ENCODE measurements at regions of chr7 and their contacts with region 1.

Region 1: GRCh38 chr7:95527033-95527775 is 41.5 kb downstream of the ASB4 start:
- DNase-seq: peak in 1 of 2 donors; percentile 13
- ATAC-seq: peak; percentile 44 to 82 (median 62)
- H3K4me3 ChIP-seq: no peak overlapping the region
- H3K4me3 Mint-ChIP-seq: no peak overlapping the region
- H3K27ac ChIP-seq: no peak overlapping the region
- H3K27ac Mint-ChIP-seq: no peak overlapping the region
- H3K4me1 ChIP-seq: no peaks in the 10 kb centered on the region
- H3K4me1 Mint-ChIP-seq: no peaks in the 10 kb centered on the region
- H3K27me3 ChIP-seq: peaks cover 3% of the 10 kb centered on the region
- H3K27me3 Mint-ChIP-seq: peaks cover 7 to 18% of the 10 kb centered on the region in 2 donors
- CTCF ChIP-seq: peak; percentile 77

Region 2: DNA sequence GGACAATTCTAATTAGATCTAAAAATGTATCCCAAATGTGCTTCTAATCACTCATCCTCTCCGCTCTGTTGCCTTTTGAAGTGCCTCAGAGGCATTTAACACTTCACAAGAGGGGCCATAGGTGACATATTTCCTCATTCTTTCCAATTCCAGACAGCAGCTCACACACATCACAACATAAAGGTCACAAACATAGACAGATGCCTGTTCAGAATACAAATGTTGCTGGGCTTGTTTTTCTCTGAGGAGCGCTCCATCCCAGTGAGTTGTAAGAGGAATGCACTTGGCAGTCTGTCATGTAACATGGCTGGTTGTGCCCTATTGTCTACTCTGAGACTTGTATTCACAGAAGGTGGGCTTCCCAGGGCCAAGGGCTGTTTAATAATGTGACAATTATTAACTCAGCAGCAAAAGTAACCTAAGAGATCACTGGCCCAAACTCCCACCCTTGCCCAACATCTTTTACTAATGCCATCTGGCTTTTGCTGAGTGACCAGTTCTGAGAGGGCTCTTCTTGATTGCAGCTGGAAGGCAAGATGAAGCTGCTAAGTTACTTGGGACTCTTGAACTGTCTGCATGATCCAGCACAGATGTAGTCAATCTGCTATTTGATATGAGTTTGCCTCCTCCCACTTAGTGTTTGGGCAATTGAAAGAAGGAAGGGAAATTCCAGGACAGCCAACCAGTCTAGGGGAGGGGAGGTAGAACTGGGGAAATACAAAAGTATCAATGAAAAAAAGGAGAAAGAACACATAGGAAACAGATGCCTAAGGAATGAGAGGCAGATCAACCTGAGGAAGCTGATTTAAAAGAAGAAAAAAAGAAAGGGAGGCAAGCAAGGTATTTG is 106.0 kb before region 1 on chr7:
- intact Hi-C with region 1: no loop called
- DNase-seq: no peak
- ATAC-seq: no peak
- H3K4me3 ChIP-seq: no peak overlapping the region
- H3K4me3 Mint-ChIP-seq: no peak overlapping the region
- H3K27ac ChIP-seq: no peak overlapping the region
- H3K27ac Mint-ChIP-seq: no peak overlapping the region
- H3K4me1 ChIP-seq: no peaks in the 10 kb centered on the region
- H3K4me1 Mint-ChIP-seq: peaks cover 11 to 22% of the 10 kb centered on the region in 2 donors
- H3K27me3 ChIP-seq: no peaks in the 10 kb centered on the region
- H3K27me3 Mint-ChIP-seq: no peaks in the 10 kb centered on the region
- CTCF ChIP-seq: no peak

Region 3: DNA sequence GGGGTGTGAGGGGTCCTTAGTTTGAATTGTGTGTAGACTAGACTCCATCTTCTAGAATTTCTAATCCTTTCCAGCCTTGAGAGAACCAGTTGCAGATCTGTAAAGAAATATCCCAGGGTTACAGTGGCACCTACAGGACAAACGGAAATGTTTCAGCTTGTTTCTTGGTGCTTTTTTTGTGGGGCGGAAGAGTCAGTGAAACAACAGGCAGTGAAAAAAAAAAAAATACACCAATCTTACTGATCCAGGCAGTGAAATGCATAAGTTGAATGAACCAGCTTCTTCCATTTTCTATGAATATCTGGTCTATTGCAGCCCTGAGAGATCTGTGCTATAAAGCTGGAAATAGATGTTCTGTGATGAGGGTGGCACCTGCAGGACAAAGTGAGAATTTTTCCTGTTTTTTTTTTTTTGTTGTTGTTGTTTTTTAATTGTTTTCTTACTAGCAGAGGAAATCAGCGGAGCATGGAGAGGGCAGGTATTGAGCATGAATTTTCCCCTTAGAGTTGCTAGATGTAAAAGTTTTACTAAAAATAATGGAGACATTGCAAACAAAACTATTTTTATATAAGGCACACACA is 163.3 kb after region 1 on chr7:
- intact Hi-C with region 1: loop called (anchors 1 kb)
- DNase-seq: peak in 1 of 2 donors; percentile 13
- ATAC-seq: peak; percentile 68 to 78 (median 77)
- H3K4me3 ChIP-seq: no peak overlapping the region
- H3K4me3 Mint-ChIP-seq: no peak overlapping the region
- H3K27ac ChIP-seq: no peak overlapping the region
- H3K27ac Mint-ChIP-seq: no peak overlapping the region
- H3K4me1 ChIP-seq: no peaks in the 10 kb centered on the region
- H3K4me1 Mint-ChIP-seq: peaks cover 5 to 7% of the 10 kb centered on the region in 2 donors
- H3K27me3 ChIP-seq: no peaks in the 10 kb centered on the region
- H3K27me3 Mint-ChIP-seq: peaks cover 7 to 12% of the 10 kb centered on the region in 2 donors
- CTCF ChIP-seq: peak; percentile 82

Region 4: DNA sequence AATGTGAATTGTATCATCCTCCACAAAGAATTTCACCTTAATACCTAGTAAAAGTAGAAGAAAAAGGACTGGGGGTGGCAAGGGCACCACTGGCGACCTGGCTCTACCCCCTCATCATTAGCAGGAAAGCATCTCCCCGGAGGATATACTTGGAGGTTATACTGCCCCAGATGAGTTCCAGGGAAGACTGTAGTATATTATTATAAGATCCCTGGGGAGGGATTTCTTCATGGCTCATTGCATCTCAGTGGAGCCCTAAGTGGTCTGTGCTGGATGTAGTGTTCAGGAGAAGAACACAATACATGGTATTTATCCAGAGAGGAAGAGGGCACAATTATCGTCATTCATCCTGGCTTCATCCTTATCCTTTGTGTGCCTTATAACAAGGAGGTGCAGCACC is 231.0 kb after region 1 on chr7:
- intact Hi-C with region 1: no loop called
- DNase-seq: no peak
- ATAC-seq: no peak
- H3K4me3 ChIP-seq: no peak overlapping the region
- H3K4me3 Mint-ChIP-seq: no peak overlapping the region
- H3K27ac ChIP-seq: no peak overlapping the region
- H3K27ac Mint-ChIP-seq: no peak overlapping the region
- H3K4me1 ChIP-seq: no peaks in the 10 kb centered on the region
- H3K4me1 Mint-ChIP-seq: no peaks in the 10 kb centered on the region
- H3K27me3 ChIP-seq: no peaks in the 10 kb centered on the region
- H3K27me3 Mint-ChIP-seq: peaks cover 4 to 16% of the 10 kb centered on the region in 2 donors
- CTCF ChIP-seq: no peak

Region 5: DNA sequence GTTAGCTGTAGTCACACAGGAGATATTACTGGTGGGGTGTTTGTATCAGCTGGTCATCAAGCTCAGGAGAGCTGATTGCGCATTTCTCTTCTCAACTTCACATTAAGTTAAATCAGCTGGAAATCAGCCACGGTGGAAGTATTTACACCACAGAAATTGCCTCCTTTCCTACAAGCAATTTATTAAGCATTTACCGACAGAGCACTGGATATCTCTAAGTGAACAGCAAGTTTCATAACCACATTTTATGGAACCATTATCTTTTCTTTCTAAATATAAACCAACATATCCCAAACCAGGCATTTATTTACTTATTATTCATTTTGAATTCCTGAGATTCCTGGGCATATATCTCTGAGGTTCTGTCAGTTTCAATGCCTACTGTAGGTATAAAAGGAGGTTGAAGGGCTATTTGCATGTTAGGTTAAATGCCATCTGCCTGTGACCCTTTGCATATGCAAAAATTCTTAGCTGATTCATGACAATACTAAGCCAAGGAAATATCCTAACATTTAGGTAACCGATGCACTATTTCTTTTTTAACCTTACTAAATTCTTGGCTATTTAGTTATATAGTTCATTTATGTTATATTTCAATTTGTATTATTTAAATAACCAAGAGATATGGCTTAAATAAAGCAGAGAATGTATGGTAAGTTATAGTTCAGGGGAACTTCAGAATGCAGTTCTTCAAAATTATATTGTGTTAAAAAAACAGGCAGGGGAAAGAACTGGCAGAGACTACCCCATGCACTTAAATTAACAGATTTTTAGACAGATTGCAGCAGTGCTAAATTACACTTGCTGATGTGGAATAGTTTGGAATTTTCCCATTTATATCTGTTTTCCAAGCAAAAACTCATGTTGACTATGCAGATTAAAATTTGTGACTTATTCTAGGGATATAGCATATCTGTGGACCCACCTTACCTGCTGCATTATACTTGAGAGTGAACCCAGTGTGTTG is 301.9 kb after region 1 on chr7:
- intact Hi-C with region 1: no loop called
- DNase-seq: no peak
- ATAC-seq: no peak
- H3K4me3 ChIP-seq: no peak overlapping the region
- H3K4me3 Mint-ChIP-seq: no peak overlapping the region
- H3K27ac ChIP-seq: no peak overlapping the region
- H3K27ac Mint-ChIP-seq: no peak overlapping the region
- H3K4me1 ChIP-seq: no peaks in the 10 kb centered on the region
- H3K4me1 Mint-ChIP-seq: no peaks in the 10 kb centered on the region
- H3K27me3 ChIP-seq: no peaks in the 10 kb centered on the region
- H3K27me3 Mint-ChIP-seq: no peaks in the 10 kb centered on the region
- CTCF ChIP-seq: no peak

Region 6: GRCh38 chr7:95952851-95953250 is 425.6 kb after region 1 on chr7:
- intact Hi-C with region 1: no loop called
- DNase-seq: no peak
- ATAC-seq: no peak
- H3K4me3 ChIP-seq: no peak overlapping the region
- H3K4me3 Mint-ChIP-seq: no peak overlapping the region
- H3K27ac ChIP-seq: no peak overlapping the region
- H3K27ac Mint-ChIP-seq: no peak overlapping the region
- H3K4me1 ChIP-seq: no peaks in the 10 kb centered on the region
- H3K4me1 Mint-ChIP-seq: peaks cover 10 to 12% of the 10 kb centered on the region in 2 donors
- H3K27me3 ChIP-seq: no peaks in the 10 kb centered on the region
- H3K27me3 Mint-ChIP-seq: no peaks in the 10 kb centered on the region
- CTCF ChIP-seq: no peak